ENCODE measurements at regions of chr2 and their contacts with region 1.

Region 1: DNA sequence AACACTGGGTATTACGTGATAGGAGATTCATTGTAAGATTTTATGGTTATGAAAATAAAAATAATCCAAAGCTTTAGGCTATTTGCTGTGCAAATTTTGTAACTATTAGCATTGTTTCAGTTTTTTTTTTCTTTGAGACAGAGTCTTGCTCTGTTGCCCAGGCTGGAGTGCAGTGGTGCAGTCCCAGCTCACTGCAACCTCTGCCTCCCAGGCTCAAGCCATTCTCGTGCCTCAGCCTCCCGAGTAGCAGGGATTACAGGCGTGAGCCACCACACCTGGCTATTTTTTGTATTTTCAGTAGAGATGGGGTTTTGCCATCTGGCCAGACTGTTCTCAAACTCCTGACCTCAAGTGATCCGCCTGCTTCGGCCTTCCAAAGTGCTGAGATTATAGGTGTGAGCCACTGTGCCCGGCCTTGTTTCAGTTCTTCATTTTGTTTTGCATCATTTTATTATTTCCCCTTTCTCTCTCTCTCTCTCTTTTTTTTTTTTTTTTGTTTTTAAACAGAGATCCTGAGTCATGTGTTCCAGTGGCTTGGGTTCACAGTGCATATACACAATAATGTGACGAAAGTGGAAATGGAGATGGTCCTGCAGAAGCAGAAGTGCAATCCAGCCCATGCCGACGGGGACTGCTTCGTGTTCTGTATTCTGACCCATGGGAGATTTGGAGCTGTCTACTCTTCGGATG is 25.8 kb downstream of the CASP10 start:
- DNase-seq: peak; percentile 90
- ATAC-seq: peak; percentile 85
- H3K4me3 ChIP-seq: peak overlapping the region in 3 of 5 experiments; percentile 8 to 40 (median 31)
- H3K4me3 Mint-ChIP-seq: peak overlapping the region; percentile 68
- H3K27ac ChIP-seq: peak overlapping the region; percentile 60 to 76
- H3K27ac Mint-ChIP-seq: peak overlapping the region; percentile 94
- H3K4me1 ChIP-seq: peaks cover 34 to 42% of the 10 kb centered on the region in 2 donors
- H3K4me1 Mint-ChIP-seq: peaks cover 58% of the 10 kb centered on the region
- H3K27me3 ChIP-seq: no peaks in the 10 kb centered on the region
- H3K27me3 Mint-ChIP-seq: no peaks in the 10 kb centered on the region
- CTCF ChIP-seq: no peak

Region 2: DNA sequence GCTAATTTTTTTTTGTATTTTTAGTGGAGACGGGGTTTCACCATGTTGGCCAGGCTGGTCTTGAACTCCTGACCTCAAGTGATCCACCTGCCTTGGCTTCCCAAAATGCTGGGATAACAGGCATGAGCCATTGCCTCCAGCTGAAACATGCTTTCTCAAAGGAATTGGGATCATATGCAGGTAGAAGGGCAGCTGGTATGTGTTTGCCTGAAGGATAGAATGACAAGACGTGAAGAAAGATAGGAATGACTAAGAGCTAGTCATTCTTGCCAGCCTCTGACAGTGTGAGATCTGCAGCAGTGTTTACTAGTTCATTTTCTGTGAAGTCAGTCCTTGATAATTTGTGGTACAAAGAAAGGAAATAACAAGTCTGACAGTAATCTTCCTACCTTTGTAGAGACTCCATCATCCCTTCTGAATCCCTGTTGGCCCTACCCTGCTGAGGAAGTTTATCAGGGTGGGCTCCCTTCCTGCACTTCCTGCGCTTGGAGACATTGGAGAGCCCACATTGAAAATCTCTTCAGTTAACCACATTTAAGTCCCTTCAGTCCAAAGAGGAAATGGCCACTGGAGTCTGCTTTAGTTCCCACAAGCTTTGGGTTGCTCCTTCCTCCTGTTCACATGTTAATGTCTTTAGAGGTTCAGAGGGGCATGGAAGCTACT is 78.1 kb before region 1 on chr2:
- CTCF ChIA-PET with region 1: no interaction called
- POLR2A ChIA-PET with region 1: no interaction called
- intact Hi-C with region 1: no loop called
- DNase-seq: peak; percentile 31
- ATAC-seq: no peak
- H3K4me3 ChIP-seq: no peak overlapping the region
- H3K4me3 Mint-ChIP-seq: peak overlapping the region; percentile 60
- H3K27ac ChIP-seq: peak overlapping the region; percentile 24 to 45
- H3K27ac Mint-ChIP-seq: peak overlapping the region; percentile 82
- H3K4me1 ChIP-seq: peaks cover 63 to 67% of the 10 kb centered on the region in 2 donors
- H3K4me1 Mint-ChIP-seq: peaks cover 71% of the 10 kb centered on the region
- H3K27me3 ChIP-seq: no peaks in the 10 kb centered on the region
- H3K27me3 Mint-ChIP-seq: no peaks in the 10 kb centered on the region
- CTCF ChIP-seq: no peak

Region 3: DNA sequence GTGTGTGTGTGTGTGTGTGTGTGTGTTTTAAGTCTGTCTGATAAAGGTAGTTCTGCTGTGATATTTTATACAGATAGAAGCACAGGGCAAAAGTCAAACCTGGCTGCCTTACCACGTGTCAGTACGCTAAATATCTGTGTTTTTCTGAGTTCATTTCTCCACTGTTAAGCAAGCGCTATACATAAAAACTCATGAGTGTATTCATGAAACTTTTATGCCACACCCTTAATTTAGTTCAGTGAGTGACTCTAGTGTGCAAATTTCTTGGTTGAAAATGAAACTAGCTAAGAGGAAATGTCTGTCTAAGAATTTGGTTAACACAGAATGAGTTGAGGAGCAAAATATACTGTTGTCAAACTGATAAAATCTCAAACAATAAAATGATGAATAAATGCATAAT is 14.6 kb before region 1 on chr2:
- CTCF ChIA-PET with region 1: interaction called, 7 read pairs
- POLR2A ChIA-PET with region 1: interaction called, 4 read pairs
- intact Hi-C with region 1: loop called (anchors 1 kb)
- DNase-seq: peak; percentile 76
- ATAC-seq: peak; percentile 96
- H3K4me3 ChIP-seq: peak overlapping the region in 1 of 5 experiments; percentile 29
- H3K4me3 Mint-ChIP-seq: peak overlapping the region; percentile 80
- H3K27ac ChIP-seq: peak overlapping the region; percentile 31 to 50
- H3K27ac Mint-ChIP-seq: peak overlapping the region; percentile 89
- H3K4me1 ChIP-seq: peaks cover 46 to 55% of the 10 kb centered on the region in 2 donors
- H3K4me1 Mint-ChIP-seq: peaks cover 59% of the 10 kb centered on the region
- H3K27me3 ChIP-seq: no peaks in the 10 kb centered on the region
- H3K27me3 Mint-ChIP-seq: no peaks in the 10 kb centered on the region
- CTCF ChIP-seq: no peak

Region 4: DNA sequence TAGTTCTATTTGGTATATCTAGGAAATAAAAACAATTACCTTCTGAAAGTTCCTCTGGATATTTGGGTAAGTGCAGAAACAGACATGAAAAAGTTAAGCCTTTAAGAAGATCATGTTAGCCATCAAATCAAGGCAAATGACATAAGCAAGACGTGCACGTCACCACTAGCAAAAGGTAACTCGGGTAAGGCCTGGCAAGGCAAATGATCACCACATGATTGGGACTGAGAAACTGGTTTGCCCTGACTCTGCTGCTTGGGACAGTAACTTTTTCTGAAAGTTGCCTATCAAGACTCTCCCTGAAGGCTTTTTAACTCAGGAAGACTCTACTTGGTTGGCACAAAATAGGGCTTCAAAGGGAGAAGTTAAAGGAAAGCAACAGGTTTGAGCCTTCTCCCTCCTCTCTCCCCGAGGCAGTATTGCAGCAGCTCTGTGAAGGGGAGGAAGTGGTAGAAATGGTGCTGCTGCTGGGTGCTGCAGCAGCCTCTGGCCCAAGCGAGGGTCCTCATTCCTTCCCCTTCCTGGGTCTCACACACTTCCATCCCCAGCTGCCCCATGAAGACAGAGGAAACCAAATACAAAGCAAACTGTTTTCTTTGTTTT is 451.7 kb after region 1 on chr2:
- CTCF ChIA-PET with region 1: no interaction called
- POLR2A ChIA-PET with region 1: no interaction called
- intact Hi-C with region 1: no loop called
- DNase-seq: no peak
- ATAC-seq: no peak
- H3K4me3 ChIP-seq: no peak overlapping the region
- H3K4me3 Mint-ChIP-seq: no peak overlapping the region
- H3K27ac ChIP-seq: no peak overlapping the region
- H3K27ac Mint-ChIP-seq: no peak overlapping the region
- H3K4me1 ChIP-seq: no peaks in the 10 kb centered on the region
- H3K4me1 Mint-ChIP-seq: no peaks in the 10 kb centered on the region
- H3K27me3 ChIP-seq: no peaks in the 10 kb centered on the region
- H3K27me3 Mint-ChIP-seq: peaks cover 36% of the 10 kb centered on the region
- CTCF ChIP-seq: no peak